B cell (primary cell): ENCODE measurements at regions of chr6 and their contacts with region 1.

Region 1: DNA sequence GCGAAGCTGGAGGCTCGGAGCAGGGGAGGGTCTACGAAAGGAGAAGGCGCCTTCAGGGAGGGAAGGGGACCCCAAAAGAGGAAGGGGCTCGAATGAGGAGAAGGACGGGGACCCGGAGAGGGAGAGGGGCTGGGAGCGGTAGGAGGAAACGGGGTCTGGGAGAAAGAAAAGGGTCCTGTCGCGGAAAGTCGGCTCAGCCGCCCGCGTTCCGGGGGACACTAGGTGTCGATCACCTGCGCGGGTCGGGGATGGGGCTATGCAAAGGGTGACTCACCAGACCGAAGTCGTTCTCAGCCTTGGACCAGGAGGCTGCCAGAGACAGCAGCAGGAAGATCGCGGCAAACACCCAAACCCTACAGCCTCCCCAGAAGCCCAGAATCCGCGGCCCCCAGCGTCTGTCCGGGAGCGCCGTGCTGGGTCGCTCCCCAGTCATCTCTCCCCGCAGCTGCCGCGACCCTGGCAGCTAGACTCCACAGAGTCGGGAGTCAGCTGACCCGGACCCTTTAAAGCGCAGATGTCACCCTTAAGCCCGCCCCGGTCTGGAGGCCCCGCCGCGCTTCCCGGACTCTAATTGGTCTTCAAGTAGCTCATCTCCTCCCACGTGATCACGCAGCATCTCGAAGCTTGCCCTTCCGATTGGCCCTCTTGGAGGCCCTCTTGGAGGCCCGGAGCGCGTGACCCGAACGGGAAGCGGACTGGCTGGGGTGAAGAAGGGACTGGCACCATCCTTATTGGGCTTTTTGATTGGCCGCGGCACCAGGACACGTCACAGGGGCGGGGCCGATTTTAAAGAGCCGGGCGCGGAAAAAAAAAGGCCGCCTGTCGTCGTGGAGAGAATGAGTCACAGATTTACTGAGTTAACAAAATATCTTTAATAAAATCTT is at the start of gene NEU1:
- DNase-seq: peak; percentile 100
- ATAC-seq: peak; percentile 90
- H3K4me3 ChIP-seq: peak within 1 kb of the TSS; percentile 69 to 92 (median 85)
- H3K4me3 Mint-ChIP-seq: peak within 1 kb of the TSS; percentile 94
- H3K27ac ChIP-seq: peak within 1 kb of the TSS; percentile 77 to 91
- H3K27ac Mint-ChIP-seq: peak within 1 kb of the TSS; percentile 92
- H3K4me1 ChIP-seq: peaks cover 18 to 23% of the 10 kb centered on the region in 2 donors
- H3K4me1 Mint-ChIP-seq: peaks cover 24% of the 10 kb centered on the region
- H3K27me3 ChIP-seq: no peaks in the 10 kb centered on the region
- H3K27me3 Mint-ChIP-seq: no peaks in the 10 kb centered on the region
- CTCF ChIP-seq: no peak
- total RNA-seq, gene NEU1: 25.3 and 26.0 TPM in 2 replicates

Region 2: GRCh38 chr6:31619805-31620585 is 242.6 kb before region 1 on chr6:
- CTCF ChIA-PET with region 1: no interaction called
- POLR2A ChIA-PET with region 1: interaction called, 3 read pairs
- intact Hi-C with region 1: loop called (anchors 1 kb)
- DNase-seq: peak; percentile 99
- ATAC-seq: peak; percentile 84
- H3K4me3 ChIP-seq: peak overlapping the region; percentile 8 to 90 (median 84)
- H3K4me3 Mint-ChIP-seq: peak overlapping the region; percentile 86
- H3K27ac ChIP-seq: peak overlapping the region; percentile 97 to 99
- H3K27ac Mint-ChIP-seq: peak overlapping the region; percentile 95
- H3K4me1 ChIP-seq: peaks cover 26 to 35% of the 10 kb centered on the region in 2 donors
- H3K4me1 Mint-ChIP-seq: peaks cover 45% of the 10 kb centered on the region
- H3K27me3 ChIP-seq: no peaks in the 10 kb centered on the region
- H3K27me3 Mint-ChIP-seq: no peaks in the 10 kb centered on the region
- CTCF ChIP-seq: no peak

Region 3: DNA sequence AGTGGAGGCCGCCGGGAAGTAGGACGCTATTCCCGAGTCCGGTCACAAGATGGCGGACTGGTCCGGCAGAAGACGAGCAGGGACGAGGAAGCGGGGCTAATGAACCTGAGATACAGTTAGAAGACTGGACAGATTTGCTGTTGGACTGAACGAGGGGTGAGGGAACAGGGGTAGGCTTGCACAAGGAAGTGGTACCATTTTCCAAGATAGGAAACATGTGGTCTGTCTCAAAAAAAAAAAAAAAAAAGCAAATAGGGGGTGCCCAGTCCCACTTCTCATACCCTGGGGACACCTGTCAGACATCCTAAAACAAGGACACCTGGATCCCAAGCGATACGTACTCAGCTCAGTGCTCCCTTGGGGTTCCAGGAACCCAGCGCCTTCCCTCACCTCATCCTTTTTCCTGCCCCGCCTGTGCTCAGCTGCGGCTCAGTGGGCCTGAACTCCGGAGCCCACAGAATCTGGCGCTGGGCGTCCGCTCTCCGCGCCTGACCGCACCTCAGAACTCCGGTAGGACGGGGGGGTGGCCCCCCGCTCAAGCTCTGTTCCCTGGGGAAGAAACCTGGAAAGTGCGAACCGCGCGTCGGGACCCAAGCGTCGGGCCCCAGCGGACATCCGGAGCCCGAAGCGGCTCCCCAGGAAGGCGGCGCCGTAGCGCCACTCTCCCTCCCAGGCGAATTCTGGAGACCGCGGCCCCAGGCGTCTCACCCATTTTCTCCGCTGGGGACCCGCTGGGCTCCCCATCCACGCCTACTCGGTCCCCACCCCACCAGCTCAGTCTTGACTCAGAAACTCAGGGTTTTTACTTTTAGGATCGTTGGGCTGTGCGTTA is 181.5 kb before region 1 on chr6 and contains the start of gene LY6G5C:
- CTCF ChIA-PET with region 1: interaction called, 7 read pairs
- POLR2A ChIA-PET with region 1: interaction called, 3 read pairs
- intact Hi-C with region 1: loop called (anchors 1 kb)
- DNase-seq: peak; percentile 79
- ATAC-seq: peak; percentile 78
- H3K4me3 ChIP-seq: peak within 1 kb of the TSS; percentile 44 to 69 (median 53)
- H3K4me3 Mint-ChIP-seq: peak within 1 kb of the TSS; percentile 88
- H3K27ac ChIP-seq: peak within 1 kb of the TSS in 1 of 2 donors; percentile 50
- H3K27ac Mint-ChIP-seq: peak within 1 kb of the TSS; percentile 57
- H3K4me1 ChIP-seq: peaks cover 19 to 40% of the 10 kb centered on the region in 2 donors
- H3K4me1 Mint-ChIP-seq: peaks cover 43% of the 10 kb centered on the region
- H3K27me3 ChIP-seq: no peaks in the 10 kb centered on the region
- H3K27me3 Mint-ChIP-seq: no peaks in the 10 kb centered on the region
- CTCF ChIP-seq: peak; percentile 55
- total RNA-seq, gene LY6G5C: 0.76 and 2.1 TPM in 2 replicates

Region 4: DNA sequence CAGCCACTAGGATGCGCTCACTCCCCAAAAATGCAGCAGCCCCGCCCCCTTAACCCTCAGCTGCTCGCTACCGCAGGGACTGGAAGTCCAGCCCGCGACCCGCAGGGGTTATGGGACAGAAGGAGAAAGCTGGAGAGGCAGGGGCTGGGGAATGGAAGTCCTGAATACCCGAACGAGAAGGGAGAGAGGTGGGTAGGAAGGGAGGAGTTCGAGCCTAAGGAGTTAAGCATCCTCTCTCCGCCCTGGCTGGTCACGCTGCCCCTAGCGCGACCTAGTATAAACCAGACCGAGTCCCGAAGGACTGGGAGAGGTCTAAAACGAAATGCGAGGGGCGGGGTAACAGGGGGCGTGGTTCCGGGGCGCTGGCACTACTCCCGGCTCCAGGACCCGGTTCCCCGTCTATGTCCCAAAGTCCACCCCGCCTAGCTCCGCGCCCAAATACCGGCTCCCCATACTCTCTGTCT is 133.0 kb before region 1 on chr6:
- CTCF ChIA-PET with region 1: interaction called, 9 read pairs
- POLR2A ChIA-PET with region 1: interaction called, 3 read pairs
- intact Hi-C with region 1: loop called (anchors 2 kb)
- DNase-seq: peak; percentile 90
- ATAC-seq: peak; percentile 48
- H3K4me3 ChIP-seq: peak overlapping the region; percentile 67 to 94 (median 85)
- H3K4me3 Mint-ChIP-seq: peak overlapping the region; percentile 99
- H3K27ac ChIP-seq: peak overlapping the region; percentile 78 to 82
- H3K27ac Mint-ChIP-seq: peak overlapping the region; percentile 97
- H3K4me1 ChIP-seq: peaks cover 49 to 58% of the 10 kb centered on the region in 2 donors
- H3K4me1 Mint-ChIP-seq: peaks cover 72% of the 10 kb centered on the region
- H3K27me3 ChIP-seq: no peaks in the 10 kb centered on the region
- H3K27me3 Mint-ChIP-seq: no peaks in the 10 kb centered on the region
- CTCF ChIP-seq: peak; percentile 89

Region 5: DNA sequence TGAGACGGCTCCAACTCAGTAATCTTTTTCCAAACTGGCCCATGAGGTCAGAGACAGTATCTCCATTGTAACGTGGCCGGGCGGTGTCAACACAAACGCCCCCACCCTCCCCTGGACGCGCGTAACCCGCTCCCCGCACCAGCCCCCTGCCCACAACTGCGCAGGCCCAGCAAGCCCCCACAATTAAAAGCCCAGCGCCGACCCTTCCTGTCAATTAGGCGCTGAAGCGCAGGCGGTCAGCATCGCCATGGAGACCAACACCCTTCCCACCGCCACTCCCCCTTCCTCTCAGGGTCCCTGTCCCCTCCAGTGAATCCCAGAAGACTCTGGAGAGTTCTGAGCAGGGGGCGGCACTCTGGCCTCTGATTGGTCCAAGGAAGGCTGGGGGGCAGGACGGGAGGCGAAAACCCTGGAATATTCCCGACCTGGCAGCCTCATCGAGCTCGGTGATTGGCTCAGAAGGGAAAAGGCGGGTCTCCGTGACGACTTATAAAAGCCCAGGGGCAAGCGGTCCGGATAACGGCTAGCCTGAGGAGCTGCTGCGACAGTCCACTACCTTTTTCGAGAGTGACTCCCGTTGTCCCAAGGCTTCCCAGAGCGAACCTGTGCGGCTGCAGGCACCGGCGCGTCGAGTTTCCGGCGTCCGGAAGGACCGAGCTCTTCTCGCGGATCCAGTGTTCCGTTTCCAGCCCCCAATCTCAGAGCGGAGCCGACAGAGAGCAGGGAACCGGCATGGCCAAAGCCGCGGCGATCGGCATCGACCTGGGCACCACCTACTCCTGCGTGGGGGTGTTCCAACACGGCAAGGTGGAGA is 47.4 kb before region 1 on chr6 and contains the starts of genes HSPA1A and HSPA1L:
- CTCF ChIA-PET with region 1: interaction called, 4 read pairs
- POLR2A ChIA-PET with region 1: no interaction called
- intact Hi-C with region 1: loop called (anchors 5 kb)
- DNase-seq: peak; percentile 74
- ATAC-seq: peak; percentile 59
- H3K4me3 ChIP-seq: peak within 1 kb of the TSS; percentile 50 to 79 (median 73)
- H3K4me3 Mint-ChIP-seq: peak within 1 kb of the TSS; percentile 96
- H3K27ac ChIP-seq: peak within 1 kb of the TSS; percentile 11 to 73
- H3K27ac Mint-ChIP-seq: peak within 1 kb of the TSS; percentile 93
- H3K4me1 ChIP-seq: peaks cover 15 to 30% of the 10 kb centered on the region in 2 donors
- H3K4me1 Mint-ChIP-seq: peaks cover 22% of the 10 kb centered on the region
- H3K27me3 ChIP-seq: no peaks in the 10 kb centered on the region
- H3K27me3 Mint-ChIP-seq: no peaks in the 10 kb centered on the region
- CTCF ChIP-seq: no peak
- total RNA-seq, gene HSPA1A: 58.8 and 61.2 TPM in 2 replicates
- total RNA-seq, gene HSPA1L: 2.0 and 2.4 TPM in 2 replicates

Region 6: GRCh38 chr6:31901953-31902643 is 39.5 kb after region 1 on chr6 and contains the start of gene ZBTB12:
- CTCF ChIA-PET with region 1: no interaction called
- POLR2A ChIA-PET with region 1: interaction called, 7 read pairs
- intact Hi-C with region 1: loop called (anchors 1 kb)
- DNase-seq: peak; percentile 93
- ATAC-seq: peak; percentile 64
- H3K4me3 ChIP-seq: peak within 1 kb of the TSS; percentile 27 to 82 (median 77)
- H3K4me3 Mint-ChIP-seq: peak within 1 kb of the TSS; percentile 94
- H3K27ac ChIP-seq: peak within 1 kb of the TSS; percentile 76 to 79
- H3K27ac Mint-ChIP-seq: peak within 1 kb of the TSS; percentile 93
- H3K4me1 ChIP-seq: peaks cover 13 to 23% of the 10 kb centered on the region in 2 donors
- H3K4me1 Mint-ChIP-seq: peaks cover 32% of the 10 kb centered on the region
- H3K27me3 ChIP-seq: no peaks in the 10 kb centered on the region
- H3K27me3 Mint-ChIP-seq: no peaks in the 10 kb centered on the region
- CTCF ChIP-seq: no peak
- total RNA-seq, gene ZBTB12: 8.1 and 8.9 TPM in 2 replicates

Region 7: GRCh38 chr6:31918069-31918720 is 55.6 kb after region 1 on chr6:
- CTCF ChIA-PET with region 1: no interaction called
- POLR2A ChIA-PET with region 1: no interaction called
- intact Hi-C with region 1: no loop called
- DNase-seq: no peak
- ATAC-seq: no peak
- H3K4me3 ChIP-seq: no peak overlapping the region
- H3K4me3 Mint-ChIP-seq: no peak overlapping the region
- H3K27ac ChIP-seq: no peak overlapping the region
- H3K27ac Mint-ChIP-seq: no peak overlapping the region
- H3K4me1 ChIP-seq: no peaks in the 10 kb centered on the region
- H3K4me1 Mint-ChIP-seq: no peaks in the 10 kb centered on the region
- H3K27me3 ChIP-seq: no peaks in the 10 kb centered on the region
- H3K27me3 Mint-ChIP-seq: peaks cover 9% of the 10 kb centered on the region
- CTCF ChIP-seq: no peak

Region 8: GRCh38 chr6:31967943-31968719 is 105.5 kb after region 1 on chr6:
- CTCF ChIA-PET with region 1: no interaction called
- POLR2A ChIA-PET with region 1: no interaction called
- intact Hi-C with region 1: no loop called
- DNase-seq: no peak
- ATAC-seq: no peak
- H3K4me3 ChIP-seq: no peak overlapping the region
- H3K4me3 Mint-ChIP-seq: no peak overlapping the region
- H3K27ac ChIP-seq: no peak overlapping the region
- H3K27ac Mint-ChIP-seq: no peak overlapping the region
- H3K4me1 ChIP-seq: peaks cover 16 to 22% of the 10 kb centered on the region in 2 donors
- H3K4me1 Mint-ChIP-seq: peaks cover 30% of the 10 kb centered on the region
- H3K27me3 ChIP-seq: no peaks in the 10 kb centered on the region
- H3K27me3 Mint-ChIP-seq: no peaks in the 10 kb centered on the region
- CTCF ChIP-seq: no peak